ENCODE measurements at regions of chr10 and their contacts with region 1.

Region 1: DNA sequence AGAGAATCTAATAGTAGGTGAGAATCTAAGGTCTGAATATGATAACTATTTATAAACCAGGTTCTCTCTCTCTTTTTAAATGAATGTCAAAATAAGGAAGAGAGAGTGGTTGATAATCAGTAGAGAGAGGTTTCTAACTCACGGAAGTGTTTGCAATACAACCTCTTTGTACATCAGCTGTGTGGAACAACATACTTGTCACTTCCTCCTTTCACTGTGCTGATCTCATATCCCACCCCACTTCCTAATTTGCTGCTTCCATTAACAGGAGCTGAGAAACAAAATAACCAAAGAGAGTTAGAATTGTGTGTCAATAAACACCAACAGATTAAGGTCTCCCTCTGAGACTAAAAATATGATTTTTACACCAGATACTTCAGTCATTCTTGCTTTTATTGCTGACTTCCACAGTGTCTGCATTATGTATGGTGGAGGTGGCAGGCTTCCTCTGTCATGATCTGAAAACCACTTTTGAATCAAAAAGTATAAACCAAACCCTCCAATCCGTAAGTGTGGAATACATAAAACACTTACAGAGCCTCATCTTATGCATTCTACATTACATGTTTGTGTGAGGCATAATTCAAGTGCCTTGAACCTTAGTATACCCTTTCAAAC is 25.0 kb downstream of the CACUL1 start:
- DNase-seq: peak in 7 of 9 donors; percentile 22 to 54 (median 51)
- ATAC-seq: peak; percentile 85
- H3K4me3 ChIP-seq: no peak overlapping the region
- H3K4me3 Mint-ChIP-seq: peak overlapping the region in 9 of 10 donors; percentile 26 to 79 (median 65)
- H3K27ac ChIP-seq: peak overlapping the region; percentile 14
- H3K27ac Mint-ChIP-seq: peak overlapping the region; percentile 29 to 95 (median 78)
- H3K4me1 ChIP-seq: peaks cover 39 to 58% of the 10 kb centered on the region in 2 donors
- H3K4me1 Mint-ChIP-seq: peaks cover 47 to 80% (median 69%) of the 10 kb centered on the region in 7 donors
- H3K27me3 ChIP-seq: no peaks in the 10 kb centered on the region
- H3K27me3 Mint-ChIP-seq: no peaks in the 10 kb centered on the region

Region 2: DNA sequence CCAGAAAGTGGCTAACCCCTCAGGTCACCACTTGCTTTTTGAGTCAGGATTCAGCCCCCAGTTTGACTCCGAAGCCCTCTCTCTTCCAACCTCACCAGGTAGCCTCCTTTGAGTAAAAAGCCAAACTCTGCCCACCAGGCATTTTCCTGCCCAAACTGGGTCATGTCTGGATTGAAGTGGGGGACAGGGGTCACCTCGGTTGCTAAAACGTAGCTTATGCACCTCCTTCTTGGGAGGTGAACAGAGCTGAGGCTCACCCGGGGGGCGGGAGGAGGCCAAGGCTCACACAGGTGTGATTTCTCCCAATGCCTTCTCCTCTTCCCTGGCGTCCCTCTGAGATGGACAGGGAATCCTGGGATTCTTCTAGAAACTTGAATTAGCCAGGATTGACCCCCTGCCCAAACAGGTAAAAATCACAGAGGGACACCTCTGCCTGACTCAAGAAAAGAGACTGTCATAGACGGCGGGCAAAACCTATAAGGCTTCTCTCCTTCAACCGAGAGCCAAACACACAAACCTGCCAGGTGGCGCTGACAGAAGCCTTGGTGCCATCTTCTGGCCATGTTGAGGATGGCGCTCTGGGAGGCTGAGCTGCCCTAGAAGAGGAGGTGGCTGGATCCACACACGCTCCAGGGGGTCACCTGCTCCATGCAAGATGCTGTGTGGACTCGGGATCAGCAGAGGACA is 185.9 kb before region 1 on chr10:
- CTCF ChIA-PET with region 1: no interaction called
- POLR2A ChIA-PET with region 1: no interaction called
- intact Hi-C with region 1: no loop called
- DNase-seq: peak in 8 of 9 donors; percentile 13 to 43 (median 26)
- ATAC-seq: peak; percentile 67
- H3K4me3 ChIP-seq: no peak overlapping the region
- H3K4me3 Mint-ChIP-seq: peak overlapping the region in 1 of 10 donors; percentile 23
- H3K27ac ChIP-seq: no peak overlapping the region
- H3K27ac Mint-ChIP-seq: no peak overlapping the region
- H3K4me1 ChIP-seq: no peaks in the 10 kb centered on the region
- H3K4me1 Mint-ChIP-seq: peaks cover 0 to 3% (median 0%) of the 10 kb centered on the region in 7 donors
- H3K27me3 ChIP-seq: peaks cover 0 to 5% of the 10 kb centered on the region in 2 donors
- H3K27me3 Mint-ChIP-seq: peaks cover 28 to 59% (median 56%) of the 10 kb centered on the region in 5 donors

Region 3: GRCh38 chr10:118746246-118746645 is 16.5 kb after region 1 on chr10:
- CTCF ChIA-PET with region 1: interaction called, 12 read pairs
- POLR2A ChIA-PET with region 1: interaction called, 4 read pairs
- intact Hi-C with region 1: loop called in 1 of 2 experiments (anchors 1 kb)
- DNase-seq: no peak
- ATAC-seq: no peak
- H3K4me3 ChIP-seq: no peak overlapping the region
- H3K4me3 Mint-ChIP-seq: peak overlapping the region in 4 of 10 donors; percentile 0 to 12 (median 4)
- H3K27ac ChIP-seq: no peak overlapping the region
- H3K27ac Mint-ChIP-seq: peak overlapping the region in 3 of 9 donors; percentile 14 to 63 (median 15)
- H3K4me1 ChIP-seq: peaks cover 0 to 3% of the 10 kb centered on the region in 2 donors
- H3K4me1 Mint-ChIP-seq: peaks cover 27 to 91% (median 82%) of the 10 kb centered on the region in 7 donors
- H3K27me3 ChIP-seq: no peaks in the 10 kb centered on the region
- H3K27me3 Mint-ChIP-seq: no peaks in the 10 kb centered on the region

Region 4: GRCh38 chr10:118850418-118851061 is 120.8 kb after region 1 on chr10:
- CTCF ChIA-PET with region 1: interaction called, 3 read pairs
- POLR2A ChIA-PET with region 1: no interaction called
- intact Hi-C with region 1: loop called in 1 of 2 experiments (anchors 10 kb)
- DNase-seq: peak in 8 of 9 donors; percentile 27 to 72 (median 37)
- ATAC-seq: peak; percentile 62
- H3K4me3 ChIP-seq: no peak overlapping the region
- H3K4me3 Mint-ChIP-seq: no peak overlapping the region
- H3K27ac ChIP-seq: no peak overlapping the region
- H3K27ac Mint-ChIP-seq: no peak overlapping the region
- H3K4me1 ChIP-seq: no peaks in the 10 kb centered on the region
- H3K4me1 Mint-ChIP-seq: peaks cover 0 to 3% (median 0%) of the 10 kb centered on the region in 7 donors
- H3K27me3 ChIP-seq: no peaks in the 10 kb centered on the region
- H3K27me3 Mint-ChIP-seq: peaks cover 0 to 9% (median 6%) of the 10 kb centered on the region in 5 donors

Region 5: DNA sequence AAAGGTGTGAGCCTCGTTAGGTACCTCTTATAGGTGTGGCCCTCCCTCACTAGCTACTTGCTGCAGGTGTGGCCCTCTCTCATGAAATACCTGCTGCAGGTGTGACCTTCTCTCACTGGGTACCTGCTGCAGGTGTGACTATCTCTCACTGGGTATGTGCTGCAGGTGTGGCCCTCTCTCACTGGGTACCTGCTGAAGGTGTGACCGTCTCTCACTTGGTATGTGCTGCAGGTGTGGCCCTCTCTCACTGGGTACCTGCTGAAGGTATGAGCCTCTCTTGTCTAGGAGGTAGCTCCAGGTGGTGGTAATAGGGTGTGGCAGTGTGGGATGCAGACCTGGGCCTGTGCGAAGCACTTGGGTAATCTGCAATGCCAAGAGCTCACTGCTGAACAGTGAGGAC is 1556.5 kb after region 1 on chr10:
- CTCF ChIA-PET with region 1: no interaction called
- POLR2A ChIA-PET with region 1: no interaction called
- intact Hi-C with region 1: no loop called
- DNase-seq: no peak
- ATAC-seq: no peak
- H3K4me3 ChIP-seq: no peak overlapping the region
- H3K4me3 Mint-ChIP-seq: no peak overlapping the region
- H3K27ac ChIP-seq: no peak overlapping the region
- H3K27ac Mint-ChIP-seq: no peak overlapping the region
- H3K4me1 ChIP-seq: no peaks in the 10 kb centered on the region
- H3K4me1 Mint-ChIP-seq: no peaks in the 10 kb centered on the region
- H3K27me3 ChIP-seq: no peaks in the 10 kb centered on the region
- H3K27me3 Mint-ChIP-seq: peaks cover 0 to 17% (median 16%) of the 10 kb centered on the region in 5 donors